ENCODE measurements at regions of chr19 and their contacts with region 1.

Region 1: GRCh38 chr19:15412832-15413231 is 6.0 kb downstream of the AKAP8L start:
- DNase-seq: peak in 1 of 2 donors; percentile 12
- ATAC-seq: peak in 1 of 2 donors; percentile 8
- H3K4me3 ChIP-seq: peak overlapping the region in 2 of 4 donors; percentile 8 to 10
- H3K27ac ChIP-seq: peak overlapping the region; percentile 91 to 97 (median 96)
- H3K4me1 ChIP-seq: peaks cover 88% of the 10 kb centered on the region in 2 donors
- H3K27me3 ChIP-seq: no peaks in the 10 kb centered on the region
- CTCF ChIP-seq: no peak
- POLR2A ChIP-seq: no peak

Region 2: GRCh38 chr19:14582894-14583340 is 829.9 kb before region 1 on chr19 and contains the start of gene CLEC17A:
- in situ Hi-C with region 1: no loop called
- intact Hi-C with region 1: no loop called
- DNase-seq: no peak
- ATAC-seq: no peak
- H3K4me3 ChIP-seq: no peak within 1 kb of the TSS
- H3K27ac ChIP-seq: no peak within 1 kb of the TSS
- H3K4me1 ChIP-seq: no peaks in the 10 kb centered on the region
- H3K27me3 ChIP-seq: no peaks in the 10 kb centered on the region
- CTCF ChIP-seq: no peak
- POLR2A ChIP-seq: no peak
- total RNA-seq, gene CLEC17A: not detected

Region 3: GRCh38 chr19:15443838-15444237 is 31.0 kb after region 1 on chr19:
- in situ Hi-C with region 1: no loop called
- intact Hi-C with region 1: loop called (anchors 2 kb)
- DNase-seq: peak; percentile 47 to 86
- ATAC-seq: peak; percentile 24 to 46
- H3K4me3 ChIP-seq: no peak overlapping the region
- H3K27ac ChIP-seq: peak overlapping the region; percentile 97 to 99 (median 98)
- H3K4me1 ChIP-seq: peaks cover 40 to 44% of the 10 kb centered on the region in 2 donors
- H3K27me3 ChIP-seq: no peaks in the 10 kb centered on the region
- CTCF ChIP-seq: no peak
- POLR2A ChIP-seq: no peak